ENCODE measurements at regions of chr1 and their contacts with region 1.

Region 1: GRCh38 chr1:941588-942383 is 17.3 kb downstream of the NOC2L start:
- DNase-seq: no peak
- ATAC-seq: peak; percentile 52
- H3K4me3 ChIP-seq: peak overlapping the region; percentile 40 to 57
- H3K27ac ChIP-seq: peak overlapping the region; percentile 87
- H3K4me1 ChIP-seq: peaks cover 68% of the 10 kb centered on the region
- H3K27me3 ChIP-seq: no peaks in the 10 kb centered on the region
- CTCF ChIP-seq: no peak

Region 2: DNA sequence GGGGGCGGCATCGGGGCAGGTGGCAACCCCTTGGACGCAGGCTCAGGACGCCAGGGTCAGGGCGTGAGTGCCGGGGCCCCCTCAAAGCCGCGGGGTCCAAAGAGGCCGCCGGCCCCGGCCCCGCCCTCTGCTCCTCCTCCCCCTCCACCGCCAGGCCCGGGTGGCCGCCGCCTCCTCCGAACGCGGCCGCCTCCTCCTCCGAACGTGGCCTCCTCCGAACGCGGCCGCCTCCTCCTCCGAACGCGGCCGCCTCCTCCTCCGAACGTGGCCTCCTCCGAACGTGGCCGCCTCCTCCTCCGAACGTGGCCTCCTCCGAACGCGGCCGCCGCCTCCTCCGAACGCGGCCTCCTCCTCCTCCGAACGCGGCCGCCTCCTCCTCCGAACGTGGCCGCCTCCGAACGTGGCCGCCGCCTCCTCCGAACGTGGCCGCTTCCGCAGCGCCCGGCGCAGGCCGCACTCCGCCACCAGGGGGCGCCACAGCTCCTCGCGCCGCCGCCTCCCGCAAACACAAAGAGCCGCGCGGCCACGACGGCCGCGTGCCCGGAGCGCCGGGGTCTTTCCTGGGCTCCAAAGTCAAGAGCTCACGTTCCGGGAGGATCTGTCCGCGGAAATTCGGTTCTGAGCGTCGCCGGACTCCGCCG is 37.4 kb before region 1 on chr1:
- CTCF ChIA-PET with region 1: interaction called, 10 read pairs
- POLR2A ChIA-PET with region 1: no interaction called
- in situ Hi-C with region 1: no loop called
- intact Hi-C with region 1: loop called (anchors 5 kb)
- DNase-seq: peak; percentile 12
- ATAC-seq: peak; percentile 80
- H3K4me3 ChIP-seq: peak overlapping the region; percentile 42 to 43; a peak in 3 of 4 replicates
- H3K27ac ChIP-seq: no peak overlapping the region
- H3K4me1 ChIP-seq: peaks cover 36% of the 10 kb centered on the region
- H3K27me3 ChIP-seq: no peaks in the 10 kb centered on the region
- CTCF ChIP-seq: peak; percentile 98